Calu3 (cell line): ENCODE measurements at regions of chr2 and their contacts with region 1.

Region 1: GRCh38 chr2:8303322-8303832 is 378.5 kb upstream of the ID2 start:
- DNase-seq: no peak
- H3K4me3 Mint-ChIP-seq: no peak overlapping the region
- H3K27ac Mint-ChIP-seq: no peak overlapping the region
- H3K4me1 Mint-ChIP-seq: peaks cover 24% of the 10 kb centered on the region
- H3K27me3 Mint-ChIP-seq: no peaks in the 10 kb centered on the region
- CTCF ChIP-seq: no peak

Region 2: GRCh38 chr2:8285081-8285480 is 18.3 kb before region 1 on chr2:
- CTCF ChIA-PET with region 1: no interaction called
- intact Hi-C with region 1: no loop called
- DNase-seq: no peak
- H3K4me3 Mint-ChIP-seq: no peak overlapping the region
- H3K27ac Mint-ChIP-seq: no peak overlapping the region
- H3K4me1 Mint-ChIP-seq: peaks cover 14% of the 10 kb centered on the region
- H3K27me3 Mint-ChIP-seq: no peaks in the 10 kb centered on the region
- CTCF ChIP-seq: no peak

Region 3: DNA sequence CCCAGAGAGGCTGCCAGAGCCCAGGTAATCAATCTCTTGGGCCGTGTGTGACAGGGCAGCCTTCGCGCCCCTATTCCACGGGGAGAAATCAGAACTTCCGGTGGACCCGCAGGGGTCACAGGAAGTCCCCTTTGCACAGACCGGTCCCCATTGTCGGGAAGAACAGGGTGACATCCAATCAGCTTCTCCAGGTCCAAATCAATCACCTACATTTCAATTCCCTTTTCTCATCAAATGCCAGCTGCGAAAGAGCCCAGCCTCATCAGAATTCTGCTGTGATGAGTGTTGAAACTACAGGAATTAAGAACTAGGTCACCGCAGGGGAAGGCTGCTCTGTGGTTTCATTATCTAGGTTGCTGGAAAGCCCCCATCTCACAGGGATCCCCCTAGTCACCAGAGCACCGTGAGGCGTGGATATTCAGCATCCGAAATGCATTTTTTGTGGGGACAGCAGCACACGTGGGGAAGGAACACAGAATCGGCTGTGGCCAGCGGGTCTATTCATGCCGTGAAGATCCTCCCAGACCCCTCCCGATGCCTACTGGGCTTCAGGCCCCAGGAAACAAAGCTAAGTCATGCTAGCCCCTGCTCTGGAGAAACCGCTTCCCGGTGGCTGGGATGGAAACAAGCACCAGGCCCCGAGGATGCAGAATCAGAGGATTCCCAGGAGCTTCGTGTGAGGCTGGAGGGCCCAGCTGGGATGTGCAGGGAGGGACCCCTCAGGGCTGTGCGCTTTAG is 184.8 kb after region 1 on chr2:
- CTCF ChIA-PET with region 1: no interaction called
- intact Hi-C with region 1: loop called (anchors 10 kb)
- DNase-seq: no peak
- H3K4me3 Mint-ChIP-seq: no peak overlapping the region
- H3K27ac Mint-ChIP-seq: no peak overlapping the region
- H3K4me1 Mint-ChIP-seq: peaks cover 20% of the 10 kb centered on the region
- H3K27me3 Mint-ChIP-seq: no peaks in the 10 kb centered on the region
- CTCF ChIP-seq: no peak

Region 4: GRCh38 chr2:8676191-8676920 is 373.0 kb after region 1 on chr2:
- CTCF ChIA-PET with region 1: interaction called, 15 read pairs
- intact Hi-C with region 1: no loop called
- DNase-seq: peak; percentile 61
- H3K4me3 Mint-ChIP-seq: peak overlapping the region; percentile 98
- H3K27ac Mint-ChIP-seq: peak overlapping the region; percentile 99
- H3K4me1 Mint-ChIP-seq: peaks cover 33% of the 10 kb centered on the region
- H3K27me3 Mint-ChIP-seq: no peaks in the 10 kb centered on the region
- CTCF ChIP-seq: no peak